Pancreas (tissue), 10 donors: ENCODE measurements at regions of chr5 and their contacts with region 1.

Region 1: DNA sequence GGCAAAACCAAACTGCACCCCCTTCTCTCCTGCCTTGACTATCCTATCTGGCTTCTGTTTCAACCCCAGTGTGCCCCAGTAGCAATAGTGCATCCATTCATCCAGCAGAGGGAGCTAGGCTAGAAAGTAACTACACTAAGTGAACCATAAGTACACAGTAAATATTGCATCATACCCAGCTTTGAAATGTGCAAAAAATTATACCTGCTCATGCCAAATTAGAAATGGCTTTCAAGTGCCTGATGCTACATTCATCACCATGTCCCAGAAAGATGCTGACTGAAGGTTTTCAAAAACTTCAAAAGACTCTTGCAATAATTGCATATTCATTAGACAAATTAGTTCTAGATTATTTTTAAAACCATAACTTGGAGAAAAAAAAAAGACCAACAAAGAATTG is 153.5 kb downstream of the PRELID2 start:
- DNase-seq: peak in 4 of 6 donors; percentile 32 to 74 (median 50)
- ATAC-seq: peak; percentile 94 to 99 (median 98)
- H3K4me3 ChIP-seq: no peak overlapping the region
- H3K27ac ChIP-seq: no peak overlapping the region
- H3K4me1 ChIP-seq: peaks cover 0 to 4% (median 0%) of the 10 kb centered on the region in 3 donors
- H3K27me3 ChIP-seq: no peaks in the 10 kb centered on the region
- CTCF ChIP-seq: peak; percentile 50 to 68 (median 54)

Region 2: GRCh38 chr5:145811834-145812625 is 130.3 kb after region 1 on chr5:
- intact Hi-C with region 1: loop called in 1 of 3 experiments (anchors 10 kb)
- DNase-seq: peak in 3 of 6 donors; percentile 18 to 32 (median 27)
- ATAC-seq: peak; percentile 67 to 84 (median 72)
- H3K4me3 ChIP-seq: no peak overlapping the region
- H3K27ac ChIP-seq: no peak overlapping the region
- H3K4me1 ChIP-seq: no peaks in the 10 kb centered on the region
- H3K27me3 ChIP-seq: no peaks in the 10 kb centered on the region
- CTCF ChIP-seq: no peak

Region 3: DNA sequence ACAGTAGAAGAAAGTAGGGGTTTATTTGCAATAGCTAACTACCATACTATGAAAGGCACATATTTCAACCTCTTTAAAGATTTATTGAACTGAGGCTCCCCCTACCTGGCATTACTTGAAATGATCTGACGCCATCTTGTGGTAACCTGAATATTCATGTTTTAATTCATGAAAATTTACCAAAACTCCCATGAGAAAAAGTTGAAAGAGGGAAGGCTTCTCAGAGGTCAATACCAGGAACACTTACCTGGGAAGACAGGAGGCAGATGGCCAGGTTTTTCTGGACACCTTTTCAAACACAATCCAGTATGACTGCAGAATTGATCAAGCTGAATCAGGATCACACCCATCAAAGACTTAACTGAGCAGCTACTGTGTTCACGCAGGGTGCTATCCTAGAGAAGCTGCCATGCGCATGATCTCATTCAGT is 144.1 kb after region 1 on chr5:
- intact Hi-C with region 1: loop called in 1 of 3 experiments (anchors 5 kb)
- DNase-seq: no peak
- ATAC-seq: peak in 3 of 4 donors; percentile 67 to 74 (median 72)
- H3K4me3 ChIP-seq: no peak overlapping the region
- H3K27ac ChIP-seq: no peak overlapping the region
- H3K4me1 ChIP-seq: peaks cover 10 to 32% (median 14%) of the 10 kb centered on the region in 3 donors
- H3K27me3 ChIP-seq: no peaks in the 10 kb centered on the region
- CTCF ChIP-seq: peak; percentile 31 to 53 (median 40)

Region 4: GRCh38 chr5:146049014-146049703 is 367.5 kb after region 1 on chr5:
- intact Hi-C with region 1: loop called in 1 of 3 experiments (anchors 10 kb)
- DNase-seq: peak in 4 of 6 donors; percentile 27 to 63 (median 42)
- ATAC-seq: peak; percentile 66 to 90 (median 83)
- H3K4me3 ChIP-seq: no peak overlapping the region
- H3K27ac ChIP-seq: no peak overlapping the region
- H3K4me1 ChIP-seq: no peaks in the 10 kb centered on the region
- H3K27me3 ChIP-seq: no peaks in the 10 kb centered on the region
- CTCF ChIP-seq: peak; percentile 27 to 51 (median 43)